ENCODE measurements at regions of chr9 and their contacts with region 1.

Region 1: GRCh38 chr9:114691046-114691955 is 9.3 kb upstream of the TEX48 start:
- DNase-seq: peak; percentile 89
- H3K4me3 Mint-ChIP-seq: peak overlapping the region; percentile 8
- H3K27ac Mint-ChIP-seq: peak overlapping the region; percentile 94
- H3K4me1 Mint-ChIP-seq: peaks cover 82% of the 10 kb centered on the region
- H3K27me3 Mint-ChIP-seq: no peaks in the 10 kb centered on the region

Region 2: GRCh38 chr9:113998525-113999255 is 692.6 kb before region 1 on chr9:
- CTCF ChIA-PET with region 1: no interaction called
- intact Hi-C with region 1: no loop called
- DNase-seq: no peak
- H3K4me3 Mint-ChIP-seq: no peak overlapping the region
- H3K27ac Mint-ChIP-seq: no peak overlapping the region
- H3K4me1 Mint-ChIP-seq: peaks cover 3% of the 10 kb centered on the region
- H3K27me3 Mint-ChIP-seq: no peaks in the 10 kb centered on the region

Region 3: GRCh38 chr9:114559830-114560513 is 131.3 kb before region 1 on chr9:
- CTCF ChIA-PET with region 1: no interaction called
- intact Hi-C with region 1: no loop called
- DNase-seq: no peak
- H3K4me3 Mint-ChIP-seq: no peak overlapping the region
- H3K27ac Mint-ChIP-seq: no peak overlapping the region
- H3K4me1 Mint-ChIP-seq: no peaks in the 10 kb centered on the region
- H3K27me3 Mint-ChIP-seq: no peaks in the 10 kb centered on the region

Region 4: DNA sequence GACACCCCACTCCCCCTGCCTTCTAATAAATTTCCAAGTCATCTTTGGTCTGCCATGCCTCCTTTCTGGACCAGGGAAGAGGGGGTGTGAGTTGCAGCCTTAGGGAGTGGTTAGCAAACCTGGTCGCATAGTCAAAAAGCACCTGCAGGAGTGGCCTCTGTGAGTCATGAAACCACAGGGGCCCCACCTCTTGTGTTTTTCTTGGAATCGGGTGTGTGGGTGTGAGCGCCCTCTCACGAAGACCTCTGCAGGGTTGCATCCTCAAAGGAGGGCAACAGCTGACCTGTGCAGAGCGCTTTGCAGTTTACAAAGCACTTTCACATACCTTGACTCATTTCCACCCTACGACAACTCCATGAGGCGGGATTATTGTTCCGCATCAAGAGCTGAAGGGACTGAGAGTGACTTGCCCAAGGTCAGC is 27.5 kb after region 1 on chr9:
- CTCF ChIA-PET with region 1: interaction called, 8 read pairs
- intact Hi-C with region 1: loop called (anchors 1 kb)
- DNase-seq: peak; percentile 97
- H3K4me3 Mint-ChIP-seq: peak overlapping the region; percentile 22
- H3K27ac Mint-ChIP-seq: peak overlapping the region; percentile 81
- H3K4me1 Mint-ChIP-seq: peaks cover 49% of the 10 kb centered on the region
- H3K27me3 Mint-ChIP-seq: peaks cover 5% of the 10 kb centered on the region

Region 5: GRCh38 chr9:114805670-114806525 is 114.6 kb after region 1 on chr9 and contains the start of gene TNFSF15:
- CTCF ChIA-PET with region 1: interaction called, 3 read pairs
- intact Hi-C with region 1: loop called (anchors 2 kb)
- DNase-seq: peak; percentile 75
- H3K4me3 Mint-ChIP-seq: peak within 1 kb of the TSS; percentile 63
- H3K27ac Mint-ChIP-seq: peak within 1 kb of the TSS; percentile 26
- H3K4me1 Mint-ChIP-seq: peaks cover 28% of the 10 kb centered on the region
- H3K27me3 Mint-ChIP-seq: no peaks in the 10 kb centered on the region
- total RNA-seq, gene TNFSF15: 0.62 to 0.74 TPM

Region 6: DNA sequence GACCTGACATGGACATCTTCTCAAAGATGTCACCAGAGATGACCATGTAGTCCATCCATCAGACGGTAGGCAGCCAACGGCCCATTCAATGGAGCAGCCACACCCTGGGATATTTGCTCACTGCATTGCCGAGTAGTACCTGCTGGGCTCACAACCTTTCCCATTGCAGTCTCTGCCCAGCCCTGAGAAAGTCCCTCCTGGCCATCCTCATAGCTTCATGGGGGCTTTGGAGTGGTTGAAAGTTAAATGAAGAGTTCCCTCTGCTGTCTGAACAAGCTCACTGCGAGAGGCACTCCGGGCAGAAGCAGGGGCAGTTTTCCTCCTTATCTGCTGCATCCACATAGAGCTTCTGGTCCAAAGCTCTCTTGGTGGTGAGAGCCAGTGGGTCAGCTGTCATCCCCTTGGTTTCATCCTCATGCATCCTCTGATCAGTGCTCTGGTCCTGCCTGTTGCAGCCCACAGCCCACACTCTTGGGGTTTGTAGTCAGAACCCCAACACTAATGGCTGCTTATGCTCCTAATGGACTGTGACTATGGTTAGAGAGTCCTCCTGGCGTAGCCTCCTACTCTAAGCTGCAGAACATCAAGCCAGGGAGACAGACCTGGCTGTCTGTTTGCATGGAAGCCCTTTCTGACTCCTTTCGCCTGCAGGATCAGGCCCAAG is 215.7 kb after region 1 on chr9:
- CTCF ChIA-PET with region 1: interaction called, 9 read pairs
- intact Hi-C with region 1: loop called (anchors 2 kb)
- DNase-seq: peak; percentile 46
- H3K4me3 Mint-ChIP-seq: no peak overlapping the region
- H3K27ac Mint-ChIP-seq: peak overlapping the region; percentile 98
- H3K4me1 Mint-ChIP-seq: peaks cover 54% of the 10 kb centered on the region
- H3K27me3 Mint-ChIP-seq: no peaks in the 10 kb centered on the region

Region 7: GRCh38 chr9:114960276-114960675 is 269.0 kb after region 1 on chr9:
- CTCF ChIA-PET with region 1: no interaction called
- intact Hi-C with region 1: loop called (anchors 1 kb)
- DNase-seq: peak; percentile 37
- H3K4me3 Mint-ChIP-seq: no peak overlapping the region
- H3K27ac Mint-ChIP-seq: peak overlapping the region; percentile 73
- H3K4me1 Mint-ChIP-seq: peaks cover 44% of the 10 kb centered on the region
- H3K27me3 Mint-ChIP-seq: no peaks in the 10 kb centered on the region

Region 8: DNA sequence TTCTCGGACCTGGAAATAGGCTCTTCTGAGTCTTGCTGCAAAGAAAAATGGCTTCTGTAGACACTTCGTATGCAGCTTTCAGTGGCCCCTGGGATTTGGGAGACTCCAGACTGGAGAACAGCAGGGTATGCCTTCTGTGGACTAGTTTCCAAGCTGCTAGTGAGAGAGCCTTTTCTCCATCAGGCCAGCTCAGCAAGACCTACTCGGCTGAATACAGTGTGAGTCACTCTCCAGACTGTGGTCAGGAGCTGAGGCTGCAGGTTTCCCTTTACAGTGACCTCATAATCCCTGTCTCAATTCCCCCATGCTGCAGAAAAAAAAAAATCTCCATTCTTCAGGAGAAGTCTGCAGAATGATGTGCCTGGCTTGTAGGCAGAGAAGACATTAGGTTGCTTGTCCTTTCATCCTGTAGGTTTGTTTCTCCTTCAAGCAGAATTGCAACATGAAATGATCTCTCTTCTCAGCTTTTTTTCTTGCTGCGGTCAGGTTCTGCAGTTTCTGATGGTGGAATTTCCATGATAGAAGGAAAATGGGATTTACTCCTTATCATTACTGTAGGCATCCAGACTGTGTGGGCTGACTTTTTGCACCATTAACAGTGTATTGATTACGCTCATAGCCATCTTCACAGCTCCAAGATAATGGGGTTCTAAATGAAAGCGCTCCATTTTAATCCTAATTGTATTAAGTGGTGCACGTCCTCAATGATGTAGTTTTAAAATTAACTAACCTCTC is 317.4 kb after region 1 on chr9:
- CTCF ChIA-PET with region 1: interaction called, 4 read pairs
- intact Hi-C with region 1: loop called (anchors 1 kb)
- DNase-seq: peak; percentile 41
- H3K4me3 Mint-ChIP-seq: no peak overlapping the region
- H3K27ac Mint-ChIP-seq: no peak overlapping the region
- H3K4me1 Mint-ChIP-seq: peaks cover 81% of the 10 kb centered on the region
- H3K27me3 Mint-ChIP-seq: no peaks in the 10 kb centered on the region

Region 9: GRCh38 chr9:115171921-115172388 is 480.7 kb after region 1 on chr9:
- CTCF ChIA-PET with region 1: no interaction called
- intact Hi-C with region 1: no loop called
- DNase-seq: no peak
- H3K4me3 Mint-ChIP-seq: no peak overlapping the region
- H3K27ac Mint-ChIP-seq: no peak overlapping the region
- H3K4me1 Mint-ChIP-seq: no peaks in the 10 kb centered on the region
- H3K27me3 Mint-ChIP-seq: peaks cover 12% of the 10 kb centered on the region